ENCODE measurements at regions of chr2 and their contacts with region 1.

Region 1: DNA sequence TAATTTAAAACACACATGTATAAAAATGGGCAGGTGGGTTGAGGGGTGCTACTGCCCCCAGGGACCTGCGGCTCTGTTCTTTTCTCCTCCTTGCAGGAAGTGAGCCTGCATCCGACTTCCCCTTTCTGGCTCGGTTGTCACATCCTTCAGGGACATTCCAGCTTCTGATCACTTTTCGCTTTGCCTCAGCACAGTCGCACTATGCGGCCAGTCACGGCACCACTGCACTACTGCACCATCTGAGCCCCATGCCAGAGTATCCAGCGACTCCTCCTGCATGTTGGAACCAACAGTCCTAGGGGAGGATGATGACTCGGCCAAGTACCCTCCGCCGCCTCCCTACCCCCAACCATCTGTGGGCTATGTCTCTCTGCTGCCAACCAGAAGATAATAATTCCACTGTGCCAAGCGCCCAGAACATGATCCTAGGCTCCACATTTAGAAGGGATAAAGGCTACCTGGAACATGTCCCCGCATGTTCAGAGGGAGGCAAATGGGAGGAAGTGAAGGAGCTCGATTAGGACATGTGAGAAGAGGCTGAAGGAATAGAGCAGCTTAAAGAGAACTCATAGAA is 17.6 kb downstream of the CDC42EP3 start:
- DNase-seq: no peak
- ATAC-seq: peak; percentile 13
- H3K4me3 ChIP-seq: no peak overlapping the region
- H3K27ac ChIP-seq: peak overlapping the region; percentile 63; the same call in 1 of the 2 replicates
- H3K4me1 ChIP-seq: peaks cover 57% of the 10 kb centered on the region
- H3K27me3 ChIP-seq: no peaks in the 10 kb centered on the region
- CTCF ChIP-seq: no peak
- POLR2A ChIP-seq: no peak
- RAD21 ChIP-seq: no peak

Region 2: GRCh38 chr2:37934591-37935513 is 281.0 kb after region 1 on chr2:
- CTCF ChIA-PET with region 1: no interaction called
- POLR2A ChIA-PET with region 1: no interaction called
- dilution Hi-C with region 1: no loop called
- in situ Hi-C with region 1: no loop called
- intact Hi-C with region 1: no loop called
- DNase-seq: no peak
- ATAC-seq: no peak
- H3K4me3 ChIP-seq: no peak overlapping the region
- H3K27ac ChIP-seq: no peak overlapping the region
- H3K4me1 ChIP-seq: no peaks in the 10 kb centered on the region
- H3K27me3 ChIP-seq: no peaks in the 10 kb centered on the region
- CTCF ChIP-seq: no peak
- POLR2A ChIP-seq: no peak
- RAD21 ChIP-seq: no peak

Region 3: DNA sequence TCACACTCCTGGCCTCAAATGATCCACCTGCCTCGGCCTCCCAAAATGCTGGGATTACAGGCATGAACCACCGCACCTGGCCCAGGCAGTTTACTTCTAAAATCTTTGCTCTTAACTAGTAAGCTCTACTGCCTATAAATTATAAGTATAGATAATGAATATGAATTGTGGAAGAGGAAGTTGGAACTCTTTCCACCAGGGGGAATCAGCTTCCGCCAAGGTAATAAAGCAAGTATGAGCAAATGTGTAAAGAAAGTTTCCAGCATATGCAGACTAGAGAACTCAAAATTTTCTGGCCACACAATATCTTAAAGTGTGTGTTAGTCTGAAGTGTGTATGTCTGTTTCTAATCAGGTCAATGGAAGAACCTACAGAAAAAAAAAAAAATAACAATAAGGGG is 339.3 kb after region 1 on chr2:
- CTCF ChIA-PET with region 1: no interaction called
- POLR2A ChIA-PET with region 1: interaction called, 11 read pairs
- dilution Hi-C with region 1: no loop called
- in situ Hi-C with region 1: no loop called
- intact Hi-C with region 1: no loop called
- DNase-seq: peak; percentile 25
- ATAC-seq: no peak
- H3K4me3 ChIP-seq: no peak overlapping the region
- H3K27ac ChIP-seq: no peak overlapping the region
- H3K4me1 ChIP-seq: no peaks in the 10 kb centered on the region
- H3K27me3 ChIP-seq: no peaks in the 10 kb centered on the region
- CTCF ChIP-seq: 0 out of 2 replicates have a peak, but pooled peaks have one; percentile 18
- POLR2A ChIP-seq: no peak
- RAD21 ChIP-seq: peak; percentile 21; the same call in 1 of the 2 replicates

Measured in IMR-90 (cell line).